CD8-positive, alpha-beta T cell (primary cell): ENCODE measurements at regions of chr15 and their contacts with region 1.

Region 1: GRCh38 chr15:90400406-90401314 is 12.6 kb downstream of the IQGAP1 start:
- DNase-seq: peak; percentile 34 to 96 (median 64)
- ATAC-seq: peak; percentile 91
- H3K4me3 ChIP-seq: peak overlapping the region in 1 of 2 experiments; percentile 18
- H3K4me3 Mint-ChIP-seq: peak overlapping the region; percentile 69
- H3K27ac ChIP-seq: peak overlapping the region; percentile 74 to 96
- H3K27ac Mint-ChIP-seq: peak overlapping the region; percentile 96
- H3K4me1 ChIP-seq: peaks cover 36% of the 10 kb centered on the region
- H3K4me1 Mint-ChIP-seq: peaks cover 66% of the 10 kb centered on the region
- H3K27me3 ChIP-seq: no peaks in the 10 kb centered on the region
- H3K27me3 Mint-ChIP-seq: no peaks in the 10 kb centered on the region
- CTCF ChIP-seq: no peak

Region 2: GRCh38 chr15:90352109-90352893 is 48.4 kb before region 1 on chr15 and contains the start of gene ZNF774:
- CTCF ChIA-PET with region 1: interaction called, 4 read pairs
- POLR2A ChIA-PET with region 1: interaction called, 5 read pairs
- intact Hi-C with region 1: loop called in 1 of 2 experiments (anchors 1 kb)
- DNase-seq: peak; percentile 76 to 97 (median 89)
- ATAC-seq: peak; percentile 97
- H3K4me3 ChIP-seq: peak within 1 kb of the TSS; percentile 66 to 69
- H3K4me3 Mint-ChIP-seq: peak within 1 kb of the TSS; percentile 90
- H3K27ac ChIP-seq: peak within 1 kb of the TSS in 1 of 2 experiments; percentile 18
- H3K27ac Mint-ChIP-seq: peak within 1 kb of the TSS; percentile 79
- H3K4me1 ChIP-seq: peaks cover 5% of the 10 kb centered on the region
- H3K4me1 Mint-ChIP-seq: peaks cover 7% of the 10 kb centered on the region
- H3K27me3 ChIP-seq: no peaks in the 10 kb centered on the region
- H3K27me3 Mint-ChIP-seq: no peaks in the 10 kb centered on the region
- CTCF ChIP-seq: no peak
- total RNA-seq, gene ZNF774: 0.08 TPM in 1 of 2 experiments, not detected in the other